Naive thymus-derived CD4-positive, alpha-beta T cell (primary cell): ENCODE measurements at regions of chr7 and their contacts with region 1.

Region 1: GRCh38 chr7:16645593-16646471 is at the starts of genes ANKMY2 and BZW2:
- DNase-seq: peak; percentile 88 to 96 (median 93)
- ATAC-seq: peak; percentile 94
- H3K4me3 ChIP-seq: peak within 1 kb of the TSS; percentile 87
- H3K4me3 Mint-ChIP-seq: peak within 1 kb of the TSS; percentile 89 to 100 (median 97)
- H3K27ac ChIP-seq: peak within 1 kb of the TSS; percentile 76
- H3K27ac Mint-ChIP-seq: peak within 1 kb of the TSS; percentile 91 to 99 (median 97)
- H3K4me1 ChIP-seq: peaks cover 14 to 25% of the 10 kb centered on the region in 2 donors
- H3K4me1 Mint-ChIP-seq: peaks cover 46 to 83% (median 65%) of the 10 kb centered on the region in 7 donors
- H3K27me3 ChIP-seq: no peaks in the 10 kb centered on the region
- H3K27me3 Mint-ChIP-seq: no peaks in the 10 kb centered on the region
- total RNA-seq, gene ANKMY2: 6.3 to 16.4 (median 8.7) TPM
- total RNA-seq, gene BZW2: 24.6 to 52.1 (median 28.0) TPM

Region 2: GRCh38 chr7:16369855-16370254 is 276.0 kb before region 1 on chr7:
- CTCF ChIA-PET with region 1: no interaction called
- POLR2A ChIA-PET with region 1: no interaction called
- intact Hi-C with region 1: no loop called
- DNase-seq: no peak
- ATAC-seq: no peak
- H3K4me3 ChIP-seq: no peak overlapping the region
- H3K4me3 Mint-ChIP-seq: no peak overlapping the region
- H3K27ac ChIP-seq: no peak overlapping the region
- H3K27ac Mint-ChIP-seq: no peak overlapping the region
- H3K4me1 ChIP-seq: no peaks in the 10 kb centered on the region
- H3K4me1 Mint-ChIP-seq: no peaks in the 10 kb centered on the region
- H3K27me3 ChIP-seq: no peaks in the 10 kb centered on the region
- H3K27me3 Mint-ChIP-seq: no peaks in the 10 kb centered on the region

Region 3: DNA sequence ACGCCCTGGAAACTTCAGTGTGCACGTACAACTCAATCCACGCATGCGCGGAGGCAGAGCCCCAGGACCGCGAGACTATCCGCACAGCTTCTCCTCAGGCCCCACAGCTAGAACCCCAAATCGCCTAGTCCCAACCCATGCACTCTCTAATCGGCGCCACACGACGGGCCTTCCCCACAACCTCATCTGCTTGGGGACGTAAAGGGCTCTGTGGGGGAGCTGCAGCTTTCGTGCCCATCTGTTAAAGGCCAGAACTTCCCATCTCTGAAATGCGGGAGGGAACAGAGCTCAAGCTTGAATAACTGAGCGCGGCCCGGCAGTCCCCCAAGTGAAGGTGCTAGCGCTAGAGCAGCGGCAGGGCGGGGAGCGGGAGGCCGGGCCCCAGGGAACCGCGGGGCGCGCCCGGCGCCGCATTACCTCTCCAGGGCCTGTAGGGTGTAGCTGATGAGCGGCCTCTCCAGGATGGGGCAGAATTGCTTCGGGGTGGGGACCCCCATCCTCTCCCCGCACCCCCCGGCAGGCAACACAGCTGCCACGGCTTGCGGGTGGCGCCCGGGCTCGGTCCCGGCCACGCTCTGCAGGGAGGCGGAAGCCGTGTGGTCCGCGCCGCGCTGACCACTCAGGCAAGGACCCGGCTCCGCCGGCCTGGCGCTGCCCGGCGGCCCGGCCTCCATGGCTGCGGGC is 225.0 kb before region 1 on chr7:
- CTCF ChIA-PET with region 1: interaction called, 5 read pairs
- POLR2A ChIA-PET with region 1: interaction called, 19 read pairs
- intact Hi-C with region 1: loop called (anchors 1 kb)
- DNase-seq: peak; percentile 71 to 93 (median 88)
- ATAC-seq: peak; percentile 93
- H3K4me3 ChIP-seq: peak overlapping the region; percentile 93
- H3K4me3 Mint-ChIP-seq: peak overlapping the region; percentile 82 to 96 (median 88)
- H3K27ac ChIP-seq: peak overlapping the region; percentile 78
- H3K27ac Mint-ChIP-seq: peak overlapping the region; percentile 84 to 98 (median 92)
- H3K4me1 ChIP-seq: peaks cover 6 to 9% of the 10 kb centered on the region in 2 donors
- H3K4me1 Mint-ChIP-seq: peaks cover 7 to 23% (median 15%) of the 10 kb centered on the region in 7 donors
- H3K27me3 ChIP-seq: no peaks in the 10 kb centered on the region
- H3K27me3 Mint-ChIP-seq: peaks cover 0 to 14% (median 0%) of the 10 kb centered on the region in 5 donors

Region 4: GRCh38 chr7:16606704-16607103 is 39.1 kb before region 1 on chr7:
- CTCF ChIA-PET with region 1: no interaction called
- POLR2A ChIA-PET with region 1: no interaction called
- intact Hi-C with region 1: no loop called
- DNase-seq: no peak
- ATAC-seq: no peak
- H3K4me3 ChIP-seq: no peak overlapping the region
- H3K4me3 Mint-ChIP-seq: no peak overlapping the region
- H3K27ac ChIP-seq: no peak overlapping the region
- H3K27ac Mint-ChIP-seq: no peak overlapping the region
- H3K4me1 ChIP-seq: no peaks in the 10 kb centered on the region
- H3K4me1 Mint-ChIP-seq: peaks cover 0 to 5% (median 0%) of the 10 kb centered on the region in 7 donors
- H3K27me3 ChIP-seq: no peaks in the 10 kb centered on the region
- H3K27me3 Mint-ChIP-seq: no peaks in the 10 kb centered on the region

Region 5: DNA sequence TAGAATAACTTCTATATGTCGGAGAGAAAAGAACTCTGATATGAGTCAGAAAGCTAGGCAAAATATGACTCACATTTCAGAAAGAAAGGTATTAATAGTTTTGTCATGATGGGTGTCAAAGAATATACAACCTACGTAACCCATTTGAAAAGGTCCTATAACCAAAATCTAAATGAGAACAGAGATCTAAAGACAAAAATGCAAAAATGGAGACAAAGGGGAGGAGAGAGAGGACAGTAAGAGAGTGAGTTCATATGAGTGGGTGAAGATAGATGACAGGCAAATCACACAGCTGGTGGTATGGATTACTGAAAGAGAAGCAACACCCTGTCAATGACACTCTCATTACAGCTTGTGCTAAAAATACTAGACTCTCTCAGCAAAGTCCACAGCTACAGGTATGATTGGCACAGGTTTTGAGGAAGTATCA is 25.8 kb before region 1 on chr7:
- CTCF ChIA-PET with region 1: no interaction called
- POLR2A ChIA-PET with region 1: interaction called, 6 read pairs
- intact Hi-C with region 1: loop called (anchors 1 to 2 kb)
- DNase-seq: no peak
- ATAC-seq: peak; percentile 45
- H3K4me3 ChIP-seq: no peak overlapping the region
- H3K4me3 Mint-ChIP-seq: peak overlapping the region in 1 of 10 donors; percentile 6
- H3K27ac ChIP-seq: no peak overlapping the region
- H3K27ac Mint-ChIP-seq: peak overlapping the region in 2 of 9 donors; percentile 1 to 66
- H3K4me1 ChIP-seq: no peaks in the 10 kb centered on the region
- H3K4me1 Mint-ChIP-seq: peaks cover 0 to 13% (median 2%) of the 10 kb centered on the region in 7 donors
- H3K27me3 ChIP-seq: no peaks in the 10 kb centered on the region
- H3K27me3 Mint-ChIP-seq: no peaks in the 10 kb centered on the region

Region 6: DNA sequence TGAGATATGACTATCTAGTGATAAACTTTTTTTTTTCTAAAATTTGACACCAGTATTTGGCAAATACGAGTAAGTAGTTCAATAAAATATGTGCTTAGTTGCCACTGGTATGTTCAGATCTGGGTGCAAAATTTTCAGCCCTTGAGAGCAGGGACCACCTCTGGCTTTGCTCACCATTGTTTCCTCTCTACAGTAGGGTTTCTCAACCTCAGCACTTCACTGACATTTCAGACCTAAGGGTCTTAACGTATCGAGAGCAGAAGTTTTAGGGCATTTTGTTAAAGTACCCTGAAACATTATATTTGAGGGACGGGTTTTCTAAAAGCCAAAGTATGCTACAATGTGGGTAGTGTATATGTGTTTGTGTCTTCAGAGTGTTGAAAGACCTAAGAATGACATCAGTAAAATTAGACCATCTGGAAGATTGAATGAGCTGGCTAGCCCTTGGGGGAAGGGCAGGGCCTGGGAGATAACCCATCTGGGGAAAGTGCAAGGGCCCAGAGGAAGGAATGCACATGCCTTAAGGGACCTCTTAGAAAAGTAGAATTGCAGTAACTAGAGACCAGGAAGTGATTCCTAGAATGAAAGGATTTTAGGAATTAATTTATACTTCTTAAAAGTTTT is 11.9 kb after region 1 on chr7:
- CTCF ChIA-PET with region 1: no interaction called
- POLR2A ChIA-PET with region 1: interaction called, 13 read pairs
- intact Hi-C with region 1: loop called in 1 of 2 experiments (anchors 1 kb)
- DNase-seq: no peak
- ATAC-seq: no peak
- H3K4me3 ChIP-seq: no peak overlapping the region
- H3K4me3 Mint-ChIP-seq: peak overlapping the region in 2 of 10 donors; percentile 1 to 56
- H3K27ac ChIP-seq: no peak overlapping the region
- H3K27ac Mint-ChIP-seq: no peak overlapping the region
- H3K4me1 ChIP-seq: no peaks in the 10 kb centered on the region
- H3K4me1 Mint-ChIP-seq: peaks cover 21 to 68% (median 53%) of the 10 kb centered on the region in 7 donors
- H3K27me3 ChIP-seq: no peaks in the 10 kb centered on the region
- H3K27me3 Mint-ChIP-seq: no peaks in the 10 kb centered on the region

Region 7: DNA sequence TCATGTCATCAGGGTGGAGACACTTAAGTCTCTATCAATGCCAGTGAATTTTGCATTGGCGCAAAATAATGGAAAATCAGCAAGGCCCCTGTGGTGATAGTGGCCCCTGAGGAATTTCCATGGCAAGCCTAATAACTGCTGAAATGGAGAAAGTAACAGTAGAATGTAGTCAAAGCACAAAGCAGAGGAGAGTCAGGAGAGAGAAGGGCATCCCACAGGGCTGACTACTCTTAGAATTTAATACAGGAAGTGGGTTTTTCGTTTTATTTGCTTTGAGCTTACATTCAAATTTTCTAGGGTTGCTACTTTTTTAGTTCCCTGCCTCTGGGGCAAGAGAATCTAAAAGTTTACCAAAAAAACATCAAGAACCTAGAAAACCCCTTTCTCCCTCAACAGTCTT is 39.1 kb after region 1 on chr7:
- CTCF ChIA-PET with region 1: no interaction called
- POLR2A ChIA-PET with region 1: interaction called, 3 read pairs
- intact Hi-C with region 1: loop called (anchors 2 kb)
- DNase-seq: peak in 6 of 9 donors; percentile 8 to 38 (median 22)
- ATAC-seq: peak; percentile 57
- H3K4me3 ChIP-seq: no peak overlapping the region
- H3K4me3 Mint-ChIP-seq: peak overlapping the region in 7 of 10 donors; percentile 2 to 63 (median 37)
- H3K27ac ChIP-seq: peak overlapping the region; percentile 49
- H3K27ac Mint-ChIP-seq: peak overlapping the region in 8 of 9 donors; percentile 48 to 90 (median 66)
- H3K4me1 ChIP-seq: peaks cover 0 to 5% of the 10 kb centered on the region in 2 donors
- H3K4me1 Mint-ChIP-seq: peaks cover 15 to 33% (median 28%) of the 10 kb centered on the region in 7 donors
- H3K27me3 ChIP-seq: peaks cover 0 to 2% of the 10 kb centered on the region in 2 donors
- H3K27me3 Mint-ChIP-seq: no peaks in the 10 kb centered on the region

Region 8: DNA sequence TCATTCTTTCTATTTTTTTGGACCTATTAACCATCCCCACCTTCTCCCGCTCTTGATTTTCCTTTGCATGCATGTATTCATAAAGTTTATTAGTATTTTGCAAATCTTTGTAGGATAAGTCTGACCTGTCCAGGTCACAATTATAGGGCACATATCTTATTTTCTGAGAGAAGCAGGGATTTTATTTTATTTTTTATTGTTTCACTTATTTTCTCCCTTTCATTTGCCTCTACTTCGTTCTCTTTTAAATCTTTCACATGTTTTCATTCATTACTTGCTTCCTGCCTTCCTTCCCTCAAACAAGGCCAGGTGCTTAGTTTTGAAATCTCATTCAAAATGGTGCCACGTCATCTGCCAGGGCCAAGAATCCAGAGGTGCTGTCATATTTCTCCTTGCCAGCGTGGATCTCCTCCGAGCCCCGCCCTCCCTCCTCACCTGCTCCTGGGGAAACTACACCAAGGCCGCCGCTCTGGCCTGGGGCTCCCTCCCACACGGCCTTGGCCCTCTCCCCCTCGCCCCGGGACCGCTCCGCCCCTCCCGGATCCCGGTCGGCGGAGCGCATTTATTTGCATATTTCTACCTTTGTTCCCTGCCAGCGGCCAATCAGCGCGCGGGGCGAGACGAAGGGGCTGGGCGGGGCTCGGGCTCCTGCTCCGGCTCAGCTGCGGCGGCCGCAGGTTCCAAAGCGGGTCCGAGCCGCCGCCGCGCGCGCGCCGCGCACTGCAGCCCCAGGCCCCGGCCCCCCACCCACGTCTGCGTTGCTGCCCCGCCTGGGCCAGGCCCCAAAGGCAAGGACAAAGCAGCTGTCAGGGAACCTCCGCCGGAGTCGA is 107.5 kb after region 1 on chr7 and contains the start of gene TSPAN13:
- CTCF ChIA-PET with region 1: no interaction called
- POLR2A ChIA-PET with region 1: no interaction called
- intact Hi-C with region 1: loop called in 1 of 2 experiments (anchors 2 kb)
- DNase-seq: peak in 7 of 9 donors; percentile 2 to 69 (median 18)
- ATAC-seq: peak; percentile 83
- H3K4me3 ChIP-seq: peak within 1 kb of the TSS; percentile 43
- H3K4me3 Mint-ChIP-seq: peak within 1 kb of the TSS; percentile 70 to 91 (median 82)
- H3K27ac ChIP-seq: no peak within 1 kb of the TSS
- H3K27ac Mint-ChIP-seq: peak within 1 kb of the TSS in 1 of 9 donors; percentile 90
- H3K4me1 ChIP-seq: peaks cover 0 to 5% of the 10 kb centered on the region in 2 donors
- H3K4me1 Mint-ChIP-seq: peaks cover 9 to 15% (median 11%) of the 10 kb centered on the region in 7 donors
- H3K27me3 ChIP-seq: peaks cover 3 to 8% of the 10 kb centered on the region in 2 donors
- H3K27me3 Mint-ChIP-seq: peaks cover 31 to 60% (median 44%) of the 10 kb centered on the region in 5 donors
- total RNA-seq, gene TSPAN13: 0.31 to 2.5 (median 0.74) TPM in 3 of 5 experiments, not detected in the others

Region 9: GRCh38 chr7:16918288-16918895 is 272.6 kb after region 1 on chr7:
- CTCF ChIA-PET with region 1: no interaction called
- POLR2A ChIA-PET with region 1: no interaction called
- intact Hi-C with region 1: no loop called
- DNase-seq: peak in 3 of 9 donors; percentile 13 to 35 (median 25)
- ATAC-seq: no peak
- H3K4me3 ChIP-seq: no peak overlapping the region
- H3K4me3 Mint-ChIP-seq: no peak overlapping the region
- H3K27ac ChIP-seq: no peak overlapping the region
- H3K27ac Mint-ChIP-seq: no peak overlapping the region
- H3K4me1 ChIP-seq: peaks cover 0 to 4% of the 10 kb centered on the region in 2 donors
- H3K4me1 Mint-ChIP-seq: peaks cover 0 to 17% (median 7%) of the 10 kb centered on the region in 7 donors
- H3K27me3 ChIP-seq: no peaks in the 10 kb centered on the region
- H3K27me3 Mint-ChIP-seq: peaks cover 0 to 7% (median 0%) of the 10 kb centered on the region in 5 donors

Region 10: DNA sequence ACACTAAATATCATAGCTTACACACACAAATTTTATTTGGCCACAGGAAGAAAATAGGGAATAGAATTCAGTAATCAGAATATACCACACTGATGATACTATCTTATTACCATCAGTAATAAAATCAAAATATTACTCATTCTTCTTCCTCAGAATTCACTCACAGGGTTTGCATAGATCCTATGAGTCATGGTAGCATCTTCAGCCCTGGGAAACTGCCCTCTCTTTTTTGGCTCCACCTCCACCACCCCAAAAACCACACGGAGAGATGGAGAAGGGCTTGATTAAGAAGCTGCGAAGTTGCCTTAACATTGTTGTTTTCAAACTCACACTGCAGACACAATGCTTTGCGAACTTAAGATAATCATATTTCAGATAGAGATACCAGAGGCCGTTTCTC is 498.5 kb after region 1 on chr7:
- CTCF ChIA-PET with region 1: no interaction called
- POLR2A ChIA-PET with region 1: no interaction called
- intact Hi-C with region 1: loop called (anchors 2 to 10 kb)
- DNase-seq: peak in 1 of 9 donors; percentile 69
- ATAC-seq: peak; percentile 82
- H3K4me3 ChIP-seq: peak overlapping the region; percentile 6
- H3K4me3 Mint-ChIP-seq: peak overlapping the region in 9 of 10 donors; percentile 26 to 85 (median 49)
- H3K27ac ChIP-seq: no peak overlapping the region
- H3K27ac Mint-ChIP-seq: peak overlapping the region in 8 of 9 donors; percentile 0 to 91 (median 55)
- H3K4me1 ChIP-seq: peaks cover 26 to 35% of the 10 kb centered on the region in 2 donors
- H3K4me1 Mint-ChIP-seq: peaks cover 21 to 57% (median 46%) of the 10 kb centered on the region in 7 donors
- H3K27me3 ChIP-seq: no peaks in the 10 kb centered on the region
- H3K27me3 Mint-ChIP-seq: no peaks in the 10 kb centered on the region